ENCODE measurements at regions of chr5 and their contacts with region 1.

Region 1: GRCh38 chr5:123350742-123351141 is 72.5 kb downstream of the CEP120 start:
- DNase-seq: no peak
- ATAC-seq: no peak
- H3K4me3 ChIP-seq: no peak overlapping the region
- H3K27ac ChIP-seq: no peak overlapping the region
- H3K4me1 ChIP-seq: no peaks in the 10 kb centered on the region
- H3K27me3 ChIP-seq: no peaks in the 10 kb centered on the region
- CTCF ChIP-seq: no peak

Region 2: DNA sequence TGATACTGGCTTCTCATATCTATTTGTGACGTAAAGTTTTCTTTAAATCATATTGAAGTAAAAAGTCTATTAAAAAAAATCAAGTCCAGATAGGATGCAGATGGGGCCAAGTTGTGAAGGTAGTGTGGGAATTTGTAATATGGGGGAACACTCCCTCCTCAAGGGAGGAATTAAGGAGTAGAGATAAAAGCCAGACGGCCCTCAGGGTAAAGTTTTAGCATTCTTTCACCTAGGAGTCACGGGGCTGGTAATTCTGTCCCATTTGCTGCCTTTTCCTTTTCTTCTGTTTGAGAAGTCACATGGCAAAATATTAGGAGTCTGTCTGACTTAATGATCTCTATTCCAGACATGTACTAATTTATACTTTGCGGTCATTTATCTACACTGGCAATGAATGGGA is 443.5 kb before region 1 on chr5:
- intact Hi-C with region 1: loop called in 1 of 10 experiments (anchors 5 kb)
- DNase-seq: no peak
- ATAC-seq: no peak
- H3K4me3 ChIP-seq: no peak overlapping the region
- H3K27ac ChIP-seq: no peak overlapping the region
- H3K4me1 ChIP-seq: peaks cover 0 to 21% (median 7%) of the 10 kb centered on the region in 9 donors
- H3K27me3 ChIP-seq: no peaks in the 10 kb centered on the region
- CTCF ChIP-seq: no peak

Region 3: DNA sequence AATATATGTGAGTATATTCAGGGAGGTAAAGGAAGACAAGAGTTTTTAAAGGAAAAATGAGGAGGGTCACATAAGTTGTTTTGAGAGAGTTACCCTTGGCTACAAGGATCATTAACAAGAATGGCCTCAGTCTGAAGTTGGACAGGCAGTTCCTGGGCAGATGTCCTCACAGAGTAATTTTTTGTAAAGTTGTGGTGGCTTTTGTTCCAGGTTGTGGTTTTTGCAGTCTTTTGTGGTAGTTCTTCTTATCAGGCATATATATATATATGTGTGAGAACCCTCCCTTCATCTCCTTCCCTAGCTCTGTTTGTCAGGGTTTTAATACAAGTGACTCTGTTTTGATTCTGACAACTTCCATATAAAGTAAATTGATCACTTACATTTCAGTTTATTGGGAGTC is 221.2 kb after region 1 on chr5:
- intact Hi-C with region 1: no loop called
- DNase-seq: no peak
- ATAC-seq: no peak
- H3K4me3 ChIP-seq: no peak overlapping the region
- H3K27ac ChIP-seq: no peak overlapping the region
- H3K4me1 ChIP-seq: no peaks in the 10 kb centered on the region
- H3K27me3 ChIP-seq: no peaks in the 10 kb centered on the region
- CTCF ChIP-seq: no peak

Measured in heart right ventricle (tissue), 16 donors.